Activated CD4-positive, alpha-beta T cell treated with anti-CD3 and anti-CD28 coated beads, Interleukin-2, amount 10 ng/mL, durations not matched to agents 7 days and 5 days (primary cell): ENCODE measurements at regions of chr15 and their contacts with region 1.

Region 1: GRCh38 chr15:40857601-40858341 is 13.9 kb downstream of the SPINT1 start:
- DNase-seq: peak; percentile 83
- H3K4me3 Mint-ChIP-seq: no peak overlapping the region
- H3K27ac Mint-ChIP-seq: peak overlapping the region; percentile 39
- H3K4me1 Mint-ChIP-seq: peaks cover 19% of the 10 kb centered on the region
- H3K27me3 Mint-ChIP-seq: peaks cover 5% of the 10 kb centered on the region

Region 2: DNA sequence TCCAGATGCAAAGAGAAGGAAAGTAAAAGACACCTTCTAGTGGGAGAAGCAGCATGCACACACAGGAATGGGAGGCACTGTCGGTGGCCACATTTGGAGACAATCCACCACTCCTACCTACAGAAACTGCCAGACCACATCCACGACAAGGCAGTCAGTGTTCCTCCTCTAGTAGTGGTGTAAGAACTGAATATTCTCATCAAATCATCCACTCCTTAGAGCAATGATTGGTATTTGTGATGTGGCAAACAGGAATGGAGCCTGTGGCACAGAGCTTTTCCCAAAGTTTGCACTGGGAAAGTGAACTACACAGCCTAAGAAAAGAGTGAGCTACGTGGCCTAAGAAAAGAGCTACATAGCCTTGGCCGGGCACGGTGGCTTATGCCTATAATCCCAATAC is 19.0 kb before region 1 on chr15:
- CTCF ChIA-PET with region 1: interaction called, 34 read pairs
- POLR2A ChIA-PET with region 1: no interaction called
- DNase-seq: no peak
- H3K4me3 Mint-ChIP-seq: no peak overlapping the region
- H3K27ac Mint-ChIP-seq: no peak overlapping the region
- H3K4me1 Mint-ChIP-seq: peaks cover 4% of the 10 kb centered on the region
- H3K27me3 Mint-ChIP-seq: peaks cover 26% of the 10 kb centered on the region

Region 3: DNA sequence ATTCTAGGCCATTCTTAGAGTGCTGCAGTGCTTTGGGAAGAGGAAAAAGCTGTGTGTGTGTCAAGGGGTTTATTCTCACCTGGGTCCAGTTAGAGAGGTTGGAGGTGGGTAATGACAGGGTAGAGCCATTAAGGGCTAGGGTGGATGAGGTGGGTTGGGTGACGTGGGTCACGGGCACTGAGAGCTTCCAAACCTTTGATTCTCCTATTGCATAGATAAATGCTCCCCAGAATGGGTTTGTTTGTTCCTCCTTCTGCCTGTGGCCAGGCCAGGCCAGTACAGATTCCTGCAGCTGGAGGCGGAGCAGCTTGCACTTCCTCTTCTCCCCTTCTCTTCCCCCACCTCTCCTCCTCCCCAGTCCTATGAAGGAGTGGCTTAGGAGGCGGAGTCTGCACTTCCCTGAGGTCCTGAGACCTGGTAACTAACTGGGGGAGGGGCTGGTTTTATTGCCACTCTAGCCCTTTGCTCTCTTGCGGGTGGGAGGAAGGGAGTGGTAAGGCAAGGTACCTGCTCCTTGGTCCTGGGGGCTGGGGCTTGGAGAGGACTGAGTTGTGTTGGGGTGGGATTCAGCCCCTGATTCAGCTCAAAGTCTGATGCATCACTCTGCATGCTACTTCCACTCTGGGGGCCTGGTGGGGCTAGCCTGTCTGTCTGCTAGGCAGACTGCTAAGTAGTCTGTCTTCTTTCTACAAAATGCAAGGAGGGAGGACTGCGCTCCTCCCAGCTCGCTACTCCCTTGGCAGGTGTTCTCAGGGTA is 10.4 kb before region 1 on chr15:
- CTCF ChIA-PET with region 1: interaction called, 34 read pairs
- POLR2A ChIA-PET with region 1: no interaction called
- DNase-seq: no peak
- H3K4me3 Mint-ChIP-seq: no peak overlapping the region
- H3K27ac Mint-ChIP-seq: no peak overlapping the region
- H3K4me1 Mint-ChIP-seq: peaks cover 31% of the 10 kb centered on the region
- H3K27me3 Mint-ChIP-seq: peaks cover 12% of the 10 kb centered on the region

Region 4: GRCh38 chr15:41043276-41043951 is 185.6 kb after region 1 on chr15:
- CTCF ChIA-PET with region 1: no interaction called
- POLR2A ChIA-PET with region 1: no interaction called
- DNase-seq: no peak
- H3K4me3 Mint-ChIP-seq: no peak overlapping the region
- H3K27ac Mint-ChIP-seq: no peak overlapping the region
- H3K4me1 Mint-ChIP-seq: no peaks in the 10 kb centered on the region
- H3K27me3 Mint-ChIP-seq: no peaks in the 10 kb centered on the region